ENCODE measurements at regions of chr9 and their contacts with region 1.

Region 1: DNA sequence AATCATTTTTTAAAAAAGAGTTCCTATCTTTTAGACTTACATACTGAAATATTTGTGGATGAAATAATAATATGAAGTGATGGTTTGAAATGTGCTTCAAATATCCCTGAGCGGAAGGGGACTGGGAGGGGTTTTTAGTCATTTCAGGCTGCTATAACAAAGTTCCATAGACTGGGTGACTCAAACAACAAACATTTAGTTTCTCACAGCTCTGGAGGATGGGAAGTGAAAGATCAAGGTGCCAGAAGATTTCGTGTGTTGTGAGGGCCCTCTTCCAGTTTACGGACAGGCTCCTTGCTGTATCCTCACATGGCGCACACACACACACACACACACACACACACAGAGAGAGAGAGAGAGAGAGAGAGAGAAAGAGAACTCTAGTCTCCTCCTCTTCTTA is 27.1 kb upstream of the TEX10 start:
- DNase-seq: peak; percentile 42
- H3K4me3 Mint-ChIP-seq: no peak overlapping the region
- H3K27ac Mint-ChIP-seq: peak overlapping the region; percentile 66
- H3K4me1 Mint-ChIP-seq: peaks cover 13% of the 10 kb centered on the region
- H3K27me3 Mint-ChIP-seq: no peaks in the 10 kb centered on the region
- CTCF ChIP-seq: no peak

Region 2: DNA sequence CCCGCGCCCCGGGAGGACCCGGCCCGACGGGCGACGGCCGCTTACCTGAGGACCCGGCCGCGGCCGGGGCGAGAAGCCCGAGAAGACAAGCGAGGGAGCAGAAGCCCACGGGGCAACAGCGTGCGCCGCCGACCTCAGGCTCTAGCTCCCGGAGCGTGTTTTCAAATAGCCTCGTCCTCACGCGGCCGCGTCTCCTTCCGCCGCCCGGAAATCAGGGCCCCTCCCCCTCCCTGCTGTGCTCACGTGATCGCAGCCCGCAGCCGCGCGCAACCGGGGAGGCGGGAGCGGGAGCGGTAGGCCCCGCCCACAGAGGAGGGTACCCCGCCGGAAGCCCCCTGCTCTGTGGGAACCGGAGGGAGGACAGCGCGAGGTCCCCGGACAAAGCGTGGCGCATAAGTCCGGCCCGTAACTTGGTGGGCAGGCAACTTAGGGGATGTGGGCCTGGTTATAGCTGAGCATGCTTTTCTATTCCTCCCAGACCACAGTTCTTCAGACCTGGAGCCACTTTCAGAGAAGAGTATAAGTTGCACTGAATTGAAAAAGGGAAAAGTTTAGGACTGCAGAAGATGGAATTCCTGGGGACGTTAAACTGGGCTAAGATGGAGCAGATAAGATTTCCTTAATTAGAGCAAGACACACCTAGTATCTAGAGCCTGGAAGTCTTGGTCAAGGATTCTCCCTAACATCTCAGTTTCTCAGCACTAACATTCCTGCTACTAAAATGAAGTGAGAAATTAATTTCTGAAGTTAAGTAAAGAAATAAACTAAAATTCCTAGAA is 26.9 kb before region 1 on chr9 and contains the start of gene TEX10:
- CTCF ChIA-PET with region 1: no interaction called
- POLR2A ChIA-PET with region 1: interaction called, 21 read pairs
- intact Hi-C with region 1: no loop called
- DNase-seq: peak; percentile 82
- H3K4me3 Mint-ChIP-seq: peak within 1 kb of the TSS; percentile 94
- H3K27ac Mint-ChIP-seq: peak within 1 kb of the TSS; percentile 95
- H3K4me1 Mint-ChIP-seq: peaks cover 35% of the 10 kb centered on the region
- H3K27me3 Mint-ChIP-seq: no peaks in the 10 kb centered on the region
- CTCF ChIP-seq: no peak
- total RNA-seq, gene TEX10: 37.0 and 38.2 TPM in 2 replicates

Region 3: GRCh38 chr9:100364013-100364412 is 15.8 kb before region 1 on chr9:
- CTCF ChIA-PET with region 1: no interaction called
- POLR2A ChIA-PET with region 1: no interaction called
- intact Hi-C with region 1: no loop called
- DNase-seq: no peak
- H3K4me3 Mint-ChIP-seq: no peak overlapping the region
- H3K27ac Mint-ChIP-seq: no peak overlapping the region
- H3K4me1 Mint-ChIP-seq: no peaks in the 10 kb centered on the region
- H3K27me3 Mint-ChIP-seq: no peaks in the 10 kb centered on the region
- CTCF ChIP-seq: no peak

Region 4: GRCh38 chr9:100413839-100414420 is 34.1 kb after region 1 on chr9:
- CTCF ChIA-PET with region 1: no interaction called
- POLR2A ChIA-PET with region 1: no interaction called
- intact Hi-C with region 1: no loop called
- DNase-seq: no peak
- H3K4me3 Mint-ChIP-seq: no peak overlapping the region
- H3K27ac Mint-ChIP-seq: no peak overlapping the region
- H3K4me1 Mint-ChIP-seq: peaks cover 6% of the 10 kb centered on the region
- H3K27me3 Mint-ChIP-seq: peaks cover 7% of the 10 kb centered on the region
- CTCF ChIP-seq: no peak

Region 5: DNA sequence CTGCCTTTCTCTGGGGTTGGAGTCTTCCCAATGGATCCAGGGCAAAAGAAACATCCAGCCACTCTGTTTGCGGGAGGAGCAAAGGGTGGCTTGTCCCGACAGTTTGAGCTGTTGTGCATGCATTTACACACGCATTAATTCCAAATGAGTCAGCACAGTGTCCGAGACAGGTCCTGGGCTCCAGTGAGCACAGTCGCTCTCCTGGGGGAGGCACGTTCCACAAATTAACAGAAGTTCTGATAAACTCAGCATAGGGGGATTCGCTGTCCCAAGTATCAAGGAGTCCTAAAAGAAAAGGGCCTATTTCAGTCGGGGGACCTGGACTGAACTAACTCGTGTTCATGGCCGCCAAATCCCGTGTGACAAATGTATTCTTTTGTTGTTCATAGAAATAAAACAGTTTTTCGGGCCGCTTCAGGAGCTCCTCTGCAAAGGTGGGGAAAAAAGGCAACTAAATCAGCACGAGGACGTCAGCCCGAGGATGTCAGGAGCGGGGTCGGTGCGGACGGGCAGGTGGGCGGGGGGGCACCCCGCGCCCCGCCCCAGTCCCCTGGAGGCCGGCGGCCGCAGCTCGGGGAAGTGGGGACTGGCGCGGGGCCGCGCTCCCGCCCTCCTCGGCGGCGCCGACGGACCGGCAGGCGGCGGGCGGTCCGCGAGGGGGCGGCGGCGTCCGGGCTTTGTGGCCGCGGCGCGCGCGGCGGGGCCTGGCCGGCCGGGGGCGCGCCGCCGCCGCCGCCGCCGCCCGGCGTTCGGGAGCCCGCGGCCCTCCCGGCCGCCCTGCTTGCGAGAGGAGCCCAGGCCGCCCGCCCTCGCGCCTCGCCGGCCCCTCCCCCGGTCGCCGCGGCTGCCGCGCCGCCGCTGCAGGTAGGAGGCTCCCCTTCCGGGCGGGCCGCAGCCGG is 46.9 kb after region 1 on chr9 and contains the start of gene MSANTD3:
- CTCF ChIA-PET with region 1: interaction called, 6 read pairs
- POLR2A ChIA-PET with region 1: interaction called, 20 read pairs
- intact Hi-C with region 1: no loop called
- DNase-seq: peak; percentile 67
- H3K4me3 Mint-ChIP-seq: peak within 1 kb of the TSS; percentile 97
- H3K27ac Mint-ChIP-seq: peak within 1 kb of the TSS; percentile 98
- H3K4me1 Mint-ChIP-seq: peaks cover 45% of the 10 kb centered on the region
- H3K27me3 Mint-ChIP-seq: no peaks in the 10 kb centered on the region
- CTCF ChIP-seq: no peak
- total RNA-seq, gene MSANTD3: 41.3 and 56.3 TPM in 2 replicates

Region 6: DNA sequence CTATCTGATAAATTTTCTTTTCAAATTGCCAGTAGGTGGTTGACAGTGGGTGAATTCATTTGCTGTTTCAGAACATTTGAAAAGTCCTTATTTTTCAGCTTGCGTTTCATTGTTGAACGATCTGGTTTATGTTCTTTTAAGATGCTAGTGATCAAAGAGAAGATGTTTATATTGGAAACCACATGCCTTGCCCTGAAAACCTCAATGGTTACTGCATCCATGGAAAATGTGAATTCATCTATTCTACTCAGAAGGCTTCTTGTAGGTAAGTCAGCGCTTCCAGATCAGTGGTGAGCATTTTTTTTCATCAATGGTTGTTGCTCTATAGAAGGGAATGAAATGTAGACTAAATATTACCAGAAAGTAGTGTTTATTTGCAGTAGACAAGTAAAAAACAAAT is 181.4 kb after region 1 on chr9:
- CTCF ChIA-PET with region 1: no interaction called
- POLR2A ChIA-PET with region 1: no interaction called
- intact Hi-C with region 1: no loop called
- DNase-seq: no peak
- H3K4me3 Mint-ChIP-seq: no peak overlapping the region
- H3K27ac Mint-ChIP-seq: no peak overlapping the region
- H3K4me1 Mint-ChIP-seq: peaks cover 7% of the 10 kb centered on the region
- H3K27me3 Mint-ChIP-seq: no peaks in the 10 kb centered on the region
- CTCF ChIP-seq: no peak

Region 7: DNA sequence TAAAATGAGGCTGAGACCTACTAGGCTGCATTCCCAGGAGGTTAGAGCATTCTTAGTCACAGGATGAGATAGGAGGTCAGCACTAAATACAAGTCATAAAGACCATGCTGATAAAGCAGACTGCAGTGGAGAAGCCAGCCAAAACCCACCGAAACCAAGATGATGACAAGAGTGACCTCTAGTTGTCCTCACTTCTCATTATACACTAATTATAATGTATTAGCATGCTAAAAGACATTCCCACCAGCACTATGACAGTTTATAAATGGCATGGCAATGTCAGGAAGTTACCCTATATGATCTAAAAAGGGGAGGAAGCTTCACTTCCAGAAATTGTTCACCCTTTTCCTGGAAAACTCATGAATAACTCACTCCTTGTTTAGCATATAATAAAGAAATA is 737.3 kb after region 1 on chr9:
- CTCF ChIA-PET with region 1: no interaction called
- POLR2A ChIA-PET with region 1: no interaction called
- intact Hi-C with region 1: no loop called
- DNase-seq: no peak
- H3K4me3 Mint-ChIP-seq: no peak overlapping the region
- H3K27ac Mint-ChIP-seq: no peak overlapping the region
- H3K4me1 Mint-ChIP-seq: no peaks in the 10 kb centered on the region
- H3K27me3 Mint-ChIP-seq: peaks cover 69% of the 10 kb centered on the region
- CTCF ChIP-seq: no peak

Measured in MCF 10A (cell line).